Calu3 (cell line): ENCODE measurements at regions of chr6 and their contacts with region 1.

Region 1: GRCh38 chr6:29737707-29738630 is 14.7 kb downstream of the HLA-F start:
- DNase-seq: peak; percentile 82
- H3K4me3 Mint-ChIP-seq: no peak overlapping the region
- H3K27ac Mint-ChIP-seq: no peak overlapping the region
- H3K4me1 Mint-ChIP-seq: no peaks in the 10 kb centered on the region
- H3K27me3 Mint-ChIP-seq: no peaks in the 10 kb centered on the region
- CTCF ChIP-seq: peak; percentile 81

Region 2: DNA sequence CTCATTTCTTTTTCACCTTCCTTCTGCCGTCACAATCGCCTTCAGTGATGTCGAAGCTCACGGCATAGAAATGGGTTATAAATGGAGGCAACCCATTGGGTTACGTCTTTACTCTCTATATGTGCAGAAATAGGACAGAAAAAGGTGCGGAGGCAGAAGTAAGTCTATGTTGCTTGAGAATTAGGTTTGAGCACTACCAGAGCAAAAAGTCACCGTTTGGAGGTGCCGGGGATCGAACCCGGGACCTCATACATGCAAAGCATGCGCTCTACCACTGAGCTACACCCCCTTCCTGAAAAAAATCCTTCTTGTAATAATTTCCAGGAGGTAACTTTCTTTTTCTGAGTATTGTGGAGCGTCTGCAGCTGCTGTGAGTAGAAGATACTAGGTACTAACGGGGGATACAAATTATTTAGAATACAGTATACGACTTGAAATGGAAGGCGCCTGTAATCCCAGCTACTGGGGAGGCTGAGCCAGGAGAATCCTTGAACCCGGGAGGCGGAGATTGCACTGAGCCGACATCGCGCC is 948.4 kb before region 1 on chr6:
- CTCF ChIA-PET with region 1: interaction called, 12 read pairs
- intact Hi-C with region 1: no loop called
- DNase-seq: peak; percentile 59
- H3K4me3 Mint-ChIP-seq: peak overlapping the region; percentile 63
- H3K27ac Mint-ChIP-seq: peak overlapping the region; percentile 78
- H3K4me1 Mint-ChIP-seq: peaks cover 5% of the 10 kb centered on the region
- H3K27me3 Mint-ChIP-seq: peaks cover 45% of the 10 kb centered on the region
- CTCF ChIP-seq: no peak

Region 3: DNA sequence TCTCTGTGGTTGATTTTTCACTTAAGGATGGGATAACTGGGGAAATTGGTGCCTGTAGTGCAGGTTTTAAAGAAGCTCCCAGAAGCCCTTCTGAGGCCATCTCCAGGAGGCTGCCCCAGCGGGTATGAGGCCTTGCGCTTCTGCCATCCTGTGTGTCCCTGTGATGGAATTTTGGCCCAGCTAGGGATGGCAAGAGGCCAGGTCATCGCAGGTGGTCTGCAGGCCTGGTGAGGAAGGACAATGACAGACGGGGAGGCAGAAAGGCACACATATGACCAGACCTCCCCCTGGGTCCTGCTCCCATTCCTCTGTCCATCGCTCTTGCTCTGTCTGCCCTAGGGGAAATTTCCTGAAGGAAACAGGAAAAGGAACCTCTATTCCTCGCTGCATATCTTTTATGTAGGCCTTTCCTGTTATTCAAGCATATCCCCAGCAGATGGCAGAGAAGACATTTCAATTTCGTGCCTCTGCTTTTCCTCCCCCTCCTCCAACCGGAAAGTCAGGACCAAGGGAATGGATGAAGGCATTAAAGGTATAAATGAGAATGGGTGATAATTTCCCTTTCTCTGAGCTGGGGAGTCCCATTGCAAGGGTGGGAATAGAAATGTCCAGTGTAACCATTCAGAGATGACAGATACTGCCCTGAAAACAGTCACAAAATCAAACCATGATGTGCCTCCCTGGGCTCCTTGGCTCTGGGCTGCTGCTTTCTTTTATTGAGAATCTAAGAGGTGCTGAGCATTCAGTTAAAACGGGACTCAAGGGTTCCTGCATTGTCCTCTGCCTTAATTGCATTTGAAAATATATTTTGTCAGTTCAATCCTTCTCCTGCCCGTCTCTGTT is 32.4 kb before region 1 on chr6:
- CTCF ChIA-PET with region 1: no interaction called
- intact Hi-C with region 1: loop called (anchors 1 kb)
- DNase-seq: peak; percentile 64
- H3K4me3 Mint-ChIP-seq: no peak overlapping the region
- H3K27ac Mint-ChIP-seq: no peak overlapping the region
- H3K4me1 Mint-ChIP-seq: peaks cover 8% of the 10 kb centered on the region
- H3K27me3 Mint-ChIP-seq: peaks cover 61% of the 10 kb centered on the region
- CTCF ChIP-seq: peak; percentile 71

Region 4: DNA sequence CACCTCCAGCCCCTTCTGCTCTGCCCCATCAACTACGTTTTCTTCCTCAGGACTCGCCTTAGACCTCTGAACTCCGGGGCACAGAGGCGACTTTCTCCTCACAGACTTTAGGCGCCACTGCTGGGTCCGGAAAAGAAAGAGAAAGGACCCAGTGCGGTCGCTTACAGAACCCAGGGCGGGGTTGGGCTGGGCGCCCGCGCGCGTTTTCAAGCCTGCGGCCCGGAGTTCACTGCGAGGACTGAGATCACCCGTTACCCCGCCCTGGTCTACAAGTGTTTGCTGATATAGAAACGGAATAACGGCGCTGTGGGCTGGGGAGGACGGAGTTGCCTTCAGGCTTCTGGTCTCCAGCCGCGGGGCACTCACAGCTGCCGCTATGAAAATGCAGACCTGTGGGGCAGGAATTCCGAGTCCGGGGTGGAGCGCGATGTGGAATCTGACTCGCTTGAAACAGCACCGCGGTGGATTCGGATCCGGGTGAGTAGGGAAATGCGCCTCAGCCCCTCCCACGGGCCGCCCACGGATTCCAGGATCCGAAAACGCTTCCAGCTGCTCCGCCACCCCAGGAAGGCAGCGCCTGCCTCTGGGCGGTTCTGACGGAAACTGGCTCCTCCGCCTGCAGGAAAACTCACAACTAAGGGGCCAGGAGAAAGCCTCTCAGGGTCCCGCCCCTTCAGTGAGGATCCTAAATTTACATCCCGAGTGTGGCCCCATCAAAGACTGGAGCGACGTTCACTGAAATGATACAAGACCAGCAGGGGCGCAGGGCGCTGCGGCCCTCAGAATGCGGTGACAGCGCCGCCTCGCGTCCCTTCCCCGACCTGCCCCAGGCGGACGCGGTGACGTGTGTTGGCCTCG is 14.7 kb after region 1 on chr6:
- CTCF ChIA-PET with region 1: interaction called, 13 read pairs
- intact Hi-C with region 1: no loop called
- DNase-seq: peak; percentile 93
- H3K4me3 Mint-ChIP-seq: peak overlapping the region; percentile 79
- H3K27ac Mint-ChIP-seq: no peak overlapping the region
- H3K4me1 Mint-ChIP-seq: peaks cover 37% of the 10 kb centered on the region
- H3K27me3 Mint-ChIP-seq: peaks cover 40% of the 10 kb centered on the region
- CTCF ChIP-seq: peak; percentile 94

Region 5: DNA sequence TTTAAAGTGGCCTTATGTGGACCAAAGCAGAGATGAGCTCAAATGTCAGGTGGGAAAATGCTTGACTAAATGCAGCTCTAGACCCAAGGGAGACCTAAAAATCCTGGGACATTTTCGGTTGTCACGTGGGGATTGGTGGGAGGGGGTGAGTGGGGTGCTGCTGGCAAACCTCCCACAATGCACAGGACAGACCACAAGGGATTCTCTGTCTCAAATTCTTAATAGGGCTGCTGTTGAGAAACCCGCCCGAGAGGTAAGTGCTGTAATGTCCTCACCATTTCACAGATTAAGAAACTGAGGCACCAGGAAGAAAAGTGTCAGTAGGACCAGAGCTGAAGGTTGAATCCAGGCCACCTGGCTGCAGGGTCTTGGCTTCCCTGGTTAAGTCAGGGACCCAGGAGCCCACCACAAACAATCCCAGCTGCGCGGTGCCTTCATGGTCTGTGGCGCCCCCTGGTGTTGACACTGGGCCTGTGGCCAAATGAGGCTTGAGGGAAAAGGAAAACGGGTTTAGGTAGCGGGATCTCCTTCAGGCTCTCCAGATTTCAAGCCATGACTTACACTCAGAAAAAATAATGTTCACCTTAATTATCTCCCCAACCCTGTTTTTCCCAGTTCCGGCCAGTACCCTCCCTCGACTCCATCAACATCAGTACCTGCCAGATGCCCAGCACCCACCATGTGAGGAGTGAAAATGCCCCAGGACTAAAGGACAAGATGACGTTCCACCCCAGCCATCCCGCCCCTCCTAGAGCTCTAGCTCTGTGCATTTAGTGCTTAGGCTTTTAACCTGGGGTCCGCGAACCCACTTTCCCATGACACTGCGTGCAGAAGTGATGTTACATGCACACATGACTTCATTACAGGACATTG is 96.8 kb after region 1 on chr6:
- CTCF ChIA-PET with region 1: interaction called, 41 read pairs
- intact Hi-C with region 1: loop called (anchors 1 kb)
- DNase-seq: peak; percentile 73
- H3K4me3 Mint-ChIP-seq: no peak overlapping the region
- H3K27ac Mint-ChIP-seq: no peak overlapping the region
- H3K4me1 Mint-ChIP-seq: peaks cover 8% of the 10 kb centered on the region
- H3K27me3 Mint-ChIP-seq: peaks cover 81% of the 10 kb centered on the region
- CTCF ChIP-seq: peak; percentile 95

Region 6: DNA sequence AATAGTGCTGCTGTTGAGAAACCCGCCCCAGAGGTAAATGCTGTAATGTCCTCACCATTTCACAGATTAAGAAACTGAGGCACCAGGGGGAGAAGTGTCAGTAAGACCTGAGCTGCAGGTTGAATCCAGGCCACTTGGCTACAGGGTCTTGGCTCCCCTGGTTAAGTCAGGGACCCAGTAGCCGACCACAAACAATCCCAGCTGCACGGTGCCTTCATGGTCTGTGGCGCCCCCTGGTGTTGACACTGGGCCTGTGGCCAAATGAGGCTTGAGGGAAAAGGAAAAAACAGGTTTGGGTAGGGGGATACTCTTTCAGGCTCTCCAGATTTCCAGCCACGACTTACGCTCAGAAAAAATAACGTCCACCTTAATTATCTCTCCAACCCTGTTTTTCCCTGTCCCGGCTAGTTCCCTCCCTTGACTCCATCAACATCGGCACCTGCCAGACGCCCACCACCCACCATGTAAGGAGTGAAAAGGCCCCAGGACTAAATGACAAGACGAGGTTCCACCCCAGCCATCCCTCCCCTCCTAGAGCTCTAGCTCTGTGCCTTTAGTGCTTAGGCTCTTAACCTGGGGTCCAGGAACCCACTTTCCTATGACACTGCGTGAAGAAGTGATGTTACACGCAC is 275.4 kb after region 1 on chr6:
- CTCF ChIA-PET with region 1: no interaction called
- intact Hi-C with region 1: loop called (anchors 10 kb)
- DNase-seq: no peak
- H3K4me3 Mint-ChIP-seq: no peak overlapping the region
- H3K27ac Mint-ChIP-seq: no peak overlapping the region
- H3K4me1 Mint-ChIP-seq: no peaks in the 10 kb centered on the region
- H3K27me3 Mint-ChIP-seq: no peaks in the 10 kb centered on the region
- CTCF ChIP-seq: peak; percentile 97